Psoas muscle (tissue), 8 donors: ENCODE measurements at regions of chr20 and their contacts with region 1.

Region 1: GRCh38 chr20:16761305-16761829 is 13.2 kb downstream of the OTOR start:
- DNase-seq: no peak
- ATAC-seq: peak; percentile 60 to 91 (median 79)
- H3K4me3 ChIP-seq: no peak overlapping the region
- H3K27ac ChIP-seq: no peak overlapping the region
- H3K4me1 ChIP-seq: no peaks in the 10 kb centered on the region
- H3K27me3 ChIP-seq: no peaks in the 10 kb centered on the region
- CTCF ChIP-seq: peak; percentile 81

Region 2: GRCh38 chr20:14963262-14963663 is 1798.1 kb before region 1 on chr20:
- intact Hi-C with region 1: no loop called
- DNase-seq: no peak
- ATAC-seq: no peak
- H3K4me3 ChIP-seq: no peak overlapping the region
- H3K27ac ChIP-seq: no peak overlapping the region
- H3K4me1 ChIP-seq: no peaks in the 10 kb centered on the region
- H3K27me3 ChIP-seq: no peaks in the 10 kb centered on the region
- CTCF ChIP-seq: no peak

Region 3: GRCh38 chr20:16279320-16279719 is 482.0 kb before region 1 on chr20:
- intact Hi-C with region 1: loop called in 1 of 2 experiments (anchors 10 kb)
- DNase-seq: no peak
- ATAC-seq: no peak
- H3K4me3 ChIP-seq: no peak overlapping the region
- H3K27ac ChIP-seq: no peak overlapping the region
- H3K4me1 ChIP-seq: peaks cover 14% of the 10 kb centered on the region
- H3K27me3 ChIP-seq: no peaks in the 10 kb centered on the region
- CTCF ChIP-seq: no peak

Region 4: DNA sequence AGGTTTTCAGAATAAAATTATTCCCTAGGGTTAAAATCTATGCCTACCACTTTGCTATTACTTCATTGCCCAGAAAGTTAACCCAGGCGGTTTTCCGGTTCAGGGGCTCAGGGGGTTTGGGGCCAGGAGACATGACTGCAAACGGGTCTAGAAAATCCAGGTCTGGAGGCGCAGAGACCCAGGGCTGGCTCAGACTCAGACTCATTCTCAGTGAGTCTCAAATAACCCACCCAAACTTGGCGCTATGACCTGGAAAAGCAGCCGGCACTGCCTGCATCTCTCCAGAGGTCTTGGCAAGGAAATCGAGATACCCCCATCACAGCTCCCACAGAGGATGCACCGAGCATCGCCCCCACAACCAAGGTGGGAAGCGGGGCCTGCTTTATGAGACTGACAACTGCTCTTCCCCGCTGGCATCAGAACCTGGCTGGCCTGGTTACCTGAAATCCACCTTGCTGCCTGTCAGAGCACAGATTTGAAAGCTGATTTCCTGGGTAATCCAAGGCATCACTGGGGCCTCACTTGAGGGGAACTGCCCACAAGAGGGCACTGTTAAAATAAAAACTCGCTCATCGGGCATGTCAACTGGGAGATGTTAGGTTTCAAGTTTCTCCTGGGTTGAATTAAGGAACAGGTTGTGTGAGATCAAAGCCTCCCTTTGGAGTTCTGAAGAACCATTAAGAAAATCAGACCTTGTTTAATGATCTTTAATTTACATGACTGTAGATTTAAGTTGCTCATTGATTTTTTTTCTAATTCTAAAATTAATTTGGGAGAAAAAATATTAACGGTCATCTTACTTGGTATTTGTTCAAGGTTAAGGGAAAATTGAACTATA is 243.2 kb before region 1 on chr20:
- intact Hi-C with region 1: loop called (anchors 2 to 5 kb)
- DNase-seq: no peak
- ATAC-seq: peak; percentile 93 to 99 (median 97)
- H3K4me3 ChIP-seq: no peak overlapping the region
- H3K27ac ChIP-seq: no peak overlapping the region
- H3K4me1 ChIP-seq: no peaks in the 10 kb centered on the region
- H3K27me3 ChIP-seq: no peaks in the 10 kb centered on the region
- CTCF ChIP-seq: peak; percentile 71

Region 5: DNA sequence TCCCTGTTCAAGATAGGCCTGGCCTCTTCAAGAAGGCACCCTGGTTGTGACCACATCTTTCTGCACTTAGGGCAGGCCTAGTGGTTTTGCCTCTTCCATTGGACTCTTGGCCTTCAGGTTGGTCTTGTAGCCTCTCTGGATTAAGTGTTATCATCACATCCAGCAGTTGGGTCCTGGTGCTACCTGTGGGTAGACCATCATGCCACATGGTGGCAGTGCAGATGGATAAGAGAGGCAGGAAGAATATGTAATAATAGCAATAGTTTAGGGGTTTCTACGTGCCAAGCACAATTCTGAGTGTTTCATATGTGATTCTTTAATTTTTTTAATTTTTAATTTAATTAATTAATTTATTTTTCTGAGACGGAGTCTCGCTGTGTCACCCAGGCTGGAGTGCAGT is 60.1 kb before region 1 on chr20:
- intact Hi-C with region 1: loop called in 1 of 2 experiments (anchors 5 kb)
- DNase-seq: no peak
- ATAC-seq: peak in 1 of 4 donors; percentile 58
- H3K4me3 ChIP-seq: no peak overlapping the region
- H3K27ac ChIP-seq: no peak overlapping the region
- H3K4me1 ChIP-seq: no peaks in the 10 kb centered on the region
- H3K27me3 ChIP-seq: no peaks in the 10 kb centered on the region
- CTCF ChIP-seq: peak; percentile 37